Astrocyte of the cerebellum (primary cell): ENCODE measurements at regions of chr5 and their contacts with region 1.

Region 1: DNA sequence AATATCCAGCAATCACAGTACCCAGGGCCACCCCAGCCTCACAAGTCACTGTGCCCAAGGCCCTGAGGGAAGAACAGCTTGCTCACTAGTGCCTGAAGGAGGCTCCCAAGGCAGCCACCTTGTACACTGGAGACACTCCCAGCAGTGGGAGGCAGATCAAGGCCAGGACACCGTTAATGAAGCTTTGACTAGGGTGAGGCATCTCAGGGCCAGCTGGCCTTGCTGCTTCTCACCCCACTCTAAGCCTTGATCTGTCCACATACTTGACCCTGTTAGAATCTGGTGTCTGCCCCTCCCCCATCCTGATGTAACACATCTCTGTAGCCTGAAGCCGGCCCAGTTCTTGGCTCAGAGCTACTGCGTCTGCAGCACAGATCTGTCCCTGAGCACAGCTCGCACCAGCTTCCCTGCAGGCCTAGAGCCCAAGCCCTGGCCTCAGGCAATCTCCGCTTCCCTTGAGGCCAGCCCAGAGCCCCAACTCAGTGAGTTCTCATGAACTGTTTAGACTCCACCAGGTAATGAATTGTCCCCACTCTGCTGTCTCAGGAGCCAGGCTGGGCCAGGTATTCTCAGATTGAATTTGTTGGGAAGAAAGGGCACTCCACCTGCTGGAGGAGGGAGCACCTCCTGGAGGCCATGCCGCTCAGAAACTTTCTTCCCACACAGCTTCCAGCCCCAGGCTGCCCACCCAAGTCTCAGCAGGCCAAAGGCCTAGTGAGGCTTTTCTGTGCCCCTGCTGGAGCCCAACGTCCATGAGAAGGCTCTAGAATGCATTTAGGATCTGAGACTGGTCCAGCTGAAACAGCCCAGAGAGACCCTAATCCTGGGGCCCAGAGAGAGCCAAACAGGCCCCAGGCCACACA is 13.5 kb upstream of the JADE2 start:
- DNase-seq: no peak
- H3K4me3 ChIP-seq: no peak overlapping the region
- CTCF ChIP-seq: peak; percentile 16

Region 2: DNA sequence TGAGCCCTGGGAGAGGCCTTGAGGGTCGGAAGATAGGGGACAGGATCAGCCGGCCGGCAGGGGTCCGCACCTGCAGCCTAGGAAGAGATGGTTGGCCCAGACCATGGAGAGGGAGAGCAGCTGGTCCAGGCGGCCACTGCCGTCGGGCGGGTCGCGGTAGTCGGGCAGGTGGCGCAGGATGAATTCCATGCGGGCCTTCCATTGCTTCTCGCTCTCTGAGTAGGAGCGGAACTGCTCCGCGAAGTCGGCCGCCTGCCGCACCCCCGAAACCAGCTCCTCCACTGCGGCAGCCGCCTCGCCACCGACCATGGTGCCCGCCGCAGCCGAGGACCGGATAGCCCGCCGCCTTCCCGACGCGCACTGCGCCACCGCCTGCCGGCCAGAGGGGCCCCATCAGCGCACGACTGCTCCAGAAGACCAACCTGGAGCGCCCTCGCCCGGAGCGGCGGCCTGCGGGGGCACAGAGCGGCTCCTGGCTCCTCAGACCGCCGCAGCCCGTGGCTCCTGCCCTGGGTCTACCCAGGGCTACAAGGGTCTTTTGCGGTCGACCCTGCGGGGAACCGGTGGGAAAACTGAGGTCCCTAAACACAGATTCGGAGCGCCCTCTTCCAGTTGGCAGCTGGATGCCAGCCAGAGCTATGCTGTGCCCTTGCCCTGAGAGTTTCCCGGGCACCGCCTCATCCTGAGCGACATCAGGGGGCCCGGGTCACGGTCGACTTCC is 100.3 kb before region 1 on chr5 and contains the start of gene CDKN2AIPNL:
- in situ Hi-C with region 1: loop called (anchors 5 kb)
- DNase-seq: peak; percentile 60
- H3K4me3 ChIP-seq: peak within 1 kb of the TSS; percentile 72
- CTCF ChIP-seq: peak; percentile 67

Region 3: GRCh38 chr5:134586866-134587524 is 75.0 kb after region 1 on chr5:
- in situ Hi-C with region 1: no loop called
- DNase-seq: peak; percentile 59
- H3K4me3 ChIP-seq: no peak overlapping the region
- CTCF ChIP-seq: peak; percentile 82